Activated B cell treated with CpG ODN at 0.5 μM for 24 hours (primary cell): ENCODE measurements at regions of chr12 and their contacts with region 1.

Region 1: GRCh38 chr12:113221181-113221997 is at the start of gene TPCN1:
- DNase-seq: peak; percentile 95
- ATAC-seq: peak; percentile 91
- H3K4me3 Mint-ChIP-seq: peak within 1 kb of the TSS; percentile 94
- H3K27ac Mint-ChIP-seq: peak within 1 kb of the TSS; percentile 94
- H3K4me1 Mint-ChIP-seq: peaks cover 45% of the 10 kb centered on the region
- H3K27me3 Mint-ChIP-seq: no peaks in the 10 kb centered on the region
- CTCF ChIP-seq: no peak
- total RNA-seq, gene TPCN1: 107 and 126 TPM in 2 replicates

Region 2: GRCh38 chr12:113184900-113185773 is 36.3 kb before region 1 on chr12 and contains the starts of genes DDX54 and RITA1:
- CTCF ChIA-PET with region 1: no interaction called
- POLR2A ChIA-PET with region 1: interaction called, 54 read pairs
- intact Hi-C with region 1: loop called (anchors 1 kb)
- DNase-seq: peak; percentile 87
- ATAC-seq: peak; percentile 83
- H3K4me3 Mint-ChIP-seq: peak within 1 kb of the TSS; percentile 93
- H3K27ac Mint-ChIP-seq: peak within 1 kb of the TSS; percentile 94
- H3K4me1 Mint-ChIP-seq: peaks cover 39% of the 10 kb centered on the region
- H3K27me3 Mint-ChIP-seq: no peaks in the 10 kb centered on the region
- CTCF ChIP-seq: no peak
- total RNA-seq, gene DDX54: 115 TPM in 2 replicates
- total RNA-seq, gene RITA1: 15.5 and 18.2 TPM in 2 replicates